ENCODE measurements at regions of chr2 and their contacts with region 1.

Region 1: DNA sequence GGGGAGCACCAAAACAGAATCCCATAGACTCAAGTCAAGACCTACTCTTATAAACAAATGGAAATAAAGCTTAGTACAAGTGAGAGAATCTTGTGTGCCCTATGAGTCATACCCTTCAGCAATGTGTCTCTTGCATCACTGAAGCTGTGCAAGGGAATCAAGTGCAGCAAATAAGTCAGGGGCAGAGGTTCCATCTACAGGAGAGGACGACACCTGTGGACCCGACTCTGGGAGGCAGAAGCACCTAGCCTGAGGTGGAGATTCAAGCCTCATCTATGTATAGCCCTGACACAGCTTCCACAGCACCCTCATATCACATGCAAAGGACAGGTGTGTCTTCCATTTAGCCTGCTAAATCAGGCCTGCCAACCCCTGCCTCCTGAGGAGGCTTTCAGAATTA is 298.2 kb downstream of the CNTNAP5 start:
- DNase-seq: no peak
- H3K4me3 ChIP-seq: no peak overlapping the region
- CTCF ChIP-seq: no peak

Region 2: DNA sequence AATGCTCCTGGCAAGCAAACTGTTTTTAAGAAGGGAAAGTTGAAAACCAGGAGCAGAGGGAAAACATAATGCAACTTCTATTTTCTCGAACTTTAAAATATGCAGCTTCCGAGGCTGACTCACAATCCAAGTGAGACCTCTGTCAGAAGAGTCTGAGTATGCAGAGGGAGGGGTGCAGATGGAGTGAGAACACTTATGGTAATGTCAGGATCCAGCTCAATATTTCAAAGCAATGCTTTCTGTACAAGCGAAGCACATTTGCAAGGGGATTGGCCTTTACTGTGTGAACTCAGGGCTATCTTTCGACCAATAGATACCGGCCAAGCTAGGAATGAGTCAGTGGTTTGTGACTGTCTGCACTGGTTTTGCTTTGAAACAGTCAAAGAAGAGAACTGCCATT is 55.5 kb before region 1 on chr2:
- in situ Hi-C with region 1: loop called (anchors 5 kb)
- DNase-seq: no peak
- H3K4me3 ChIP-seq: no peak overlapping the region
- CTCF ChIP-seq: no peak

Measured in astrocyte of the cerebellum (primary cell).